ENCODE measurements at regions of chr4 and their contacts with region 1.

Region 1: GRCh38 chr4:155953151-155954114 is at the start of gene CTSO:
- DNase-seq: peak in 1 of 2 experiments; percentile 76
- H3K4me3 ChIP-seq: peak within 1 kb of the TSS; percentile 48 to 59 (median 52)
- H3K27ac ChIP-seq: no peak within 1 kb of the TSS
- H3K4me1 ChIP-seq: no peaks in the 10 kb centered on the region
- H3K27me3 ChIP-seq: no peaks in the 10 kb centered on the region
- CTCF ChIP-seq: peak in 2 of 3 experiments; percentile 37 to 63; a peak in 3 of 4 replicates
- EP300 ChIP-seq: no peak
- POLR2A ChIP-seq: peak in 1 of 2 experiments; percentile 69; a peak in 2 of 3 replicates
- RAD21 ChIP-seq: peak; percentile 62 to 65
- total RNA-seq, gene CTSO: 0.41 and 0.65 TPM in 2 replicates

Region 2: DNA sequence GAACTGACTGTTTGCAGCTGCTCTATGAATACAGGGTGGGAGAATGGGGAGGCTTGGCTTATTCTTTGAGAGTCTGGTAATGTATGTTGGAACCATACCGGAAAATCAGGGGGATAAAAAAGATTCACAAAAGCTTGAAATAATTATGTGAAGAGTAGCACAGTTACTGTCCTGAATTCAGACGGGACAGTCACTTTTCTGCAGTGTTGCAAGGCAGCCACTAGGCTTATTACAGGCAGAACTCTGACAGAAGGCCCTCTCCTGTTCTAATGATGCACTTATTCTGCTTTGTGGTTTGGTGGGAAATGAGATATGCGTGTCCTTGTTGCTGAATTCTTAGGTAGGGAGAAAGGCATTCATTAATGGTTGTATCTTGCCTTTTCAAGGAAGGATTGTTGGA is 157.4 kb before region 1 on chr4:
- CTCF ChIA-PET with region 1: interaction called, 10 read pairs
- POLR2A ChIA-PET with region 1: no interaction called
- DNase-seq: no peak
- H3K4me3 ChIP-seq: no peak overlapping the region
- H3K27ac ChIP-seq: no peak overlapping the region
- H3K4me1 ChIP-seq: peaks cover 0 to 2% (median 0%) of the 10 kb centered on the region in 4 experiments; a peak in 1 of 7 replicates
- H3K27me3 ChIP-seq: no peaks in the 10 kb centered on the region
- CTCF ChIP-seq: peak; percentile 6 to 72 (median 60)
- EP300 ChIP-seq: no peak
- POLR2A ChIP-seq: no peak
- RAD21 ChIP-seq: peak; percentile 30 to 44; a peak in 3 of 4 replicates

Region 3: DNA sequence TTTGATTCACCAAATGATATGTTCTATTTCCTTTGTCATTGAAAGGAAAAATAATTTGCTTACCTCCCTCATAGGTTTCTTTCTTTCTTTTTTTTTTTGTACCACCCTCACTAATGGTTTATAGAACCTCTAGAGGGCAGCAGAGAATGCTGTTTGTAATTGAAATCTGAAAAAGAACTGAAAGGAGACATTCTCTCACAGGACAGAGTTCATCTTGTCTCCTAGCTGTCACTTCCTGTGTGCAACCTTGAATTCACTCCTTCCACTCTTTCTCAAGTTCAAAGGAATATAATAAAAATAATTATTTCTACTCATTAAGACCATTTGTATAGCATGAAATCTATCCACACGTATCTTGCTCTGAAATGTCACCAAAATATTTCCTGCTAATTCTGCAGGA is 143.6 kb before region 1 on chr4:
- CTCF ChIA-PET with region 1: interaction called, 69 read pairs
- POLR2A ChIA-PET with region 1: interaction called, 4 read pairs
- DNase-seq: no peak
- H3K4me3 ChIP-seq: no peak overlapping the region
- H3K27ac ChIP-seq: no peak overlapping the region
- H3K4me1 ChIP-seq: no peaks in the 10 kb centered on the region
- H3K27me3 ChIP-seq: no peaks in the 10 kb centered on the region
- CTCF ChIP-seq: peak in 2 of 3 experiments; percentile 45 to 56; a peak in 2 of 4 replicates
- EP300 ChIP-seq: no peak
- POLR2A ChIP-seq: no peak
- RAD21 ChIP-seq: peak; percentile 73 to 74

Measured in H1 (cell line).